ENCODE measurements at regions of chr18 and their contacts with region 1.

Region 1: GRCh38 chr18:61496374-61496773 is 163.1 kb downstream of the CDH20 start:
- DNase-seq: no peak
- ATAC-seq: no peak
- H3K4me3 ChIP-seq: no peak overlapping the region
- H3K27ac ChIP-seq: no peak overlapping the region
- H3K4me1 ChIP-seq: no peaks in the 10 kb centered on the region
- H3K27me3 ChIP-seq: peaks cover 0 to 8% (median 0%) of the 10 kb centered on the region in 7 donors
- CTCF ChIP-seq: no peak

Region 2: DNA sequence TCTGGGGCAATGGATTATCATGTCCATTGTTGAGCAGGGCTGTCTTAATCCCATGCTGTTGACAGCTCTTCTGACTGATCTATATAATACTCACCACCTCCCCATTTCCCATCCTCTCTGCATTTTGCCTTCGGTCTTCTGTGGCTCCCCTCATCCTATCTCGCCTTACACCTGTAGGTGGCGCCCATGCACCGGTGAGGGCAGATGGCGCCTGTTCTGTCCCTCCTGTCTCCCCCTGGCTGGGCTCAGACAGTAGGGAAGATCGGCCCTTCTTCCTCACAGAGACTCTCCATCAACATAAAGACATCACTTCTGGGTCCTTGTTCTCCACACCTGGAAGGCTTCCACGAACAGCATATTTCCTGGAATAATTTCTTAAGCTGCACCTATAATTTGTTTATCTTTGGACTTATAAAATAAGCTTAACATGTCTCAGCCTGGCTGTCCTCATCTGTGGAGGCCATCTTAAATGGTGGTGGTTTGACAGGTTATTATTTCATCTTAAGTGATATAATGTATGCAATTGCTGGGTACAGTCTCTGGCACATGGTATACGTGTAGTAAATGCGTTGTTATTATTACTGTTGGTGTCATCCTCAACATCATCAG is 174.0 kb before region 1 on chr18:
- intact Hi-C with region 1: loop called in 8 of 10 experiments (anchors 5 to 10 kb)
- DNase-seq: peak; percentile 41 to 58
- ATAC-seq: peak in 6 of 8 donors; percentile 62 to 90 (median 72)
- H3K4me3 ChIP-seq: no peak overlapping the region
- H3K27ac ChIP-seq: no peak overlapping the region
- H3K4me1 ChIP-seq: no peaks in the 10 kb centered on the region
- H3K27me3 ChIP-seq: peaks cover 0 to 4% (median 0%) of the 10 kb centered on the region in 7 donors
- CTCF ChIP-seq: peak; percentile 29 to 77 (median 72)